ENCODE measurements at regions of chr6 and their contacts with region 1.

Region 1: GRCh38 chr6:105733565-105734162 is 330.8 kb upstream of the PREP start:
- DNase-seq: no peak
- H3K4me3 Mint-ChIP-seq: no peak overlapping the region
- H3K27ac Mint-ChIP-seq: no peak overlapping the region
- H3K4me1 Mint-ChIP-seq: no peaks in the 10 kb centered on the region
- H3K27me3 Mint-ChIP-seq: no peaks in the 10 kb centered on the region
- CTCF ChIP-seq: peak; percentile 60

Region 2: GRCh38 chr6:105484238-105485161 is 249.2 kb before region 1 on chr6:
- CTCF ChIA-PET with region 1: no interaction called
- intact Hi-C with region 1: loop called (anchors 5 kb)
- DNase-seq: no peak
- H3K4me3 Mint-ChIP-seq: no peak overlapping the region
- H3K27ac Mint-ChIP-seq: no peak overlapping the region
- H3K4me1 Mint-ChIP-seq: peaks cover 11% of the 10 kb centered on the region
- H3K27me3 Mint-ChIP-seq: no peaks in the 10 kb centered on the region
- CTCF ChIP-seq: peak; percentile 57

Region 3: GRCh38 chr6:105835373-105835772 is 101.7 kb after region 1 on chr6:
- CTCF ChIA-PET with region 1: no interaction called
- intact Hi-C with region 1: loop called (anchors 2 kb)
- DNase-seq: peak; percentile 48
- H3K4me3 Mint-ChIP-seq: no peak overlapping the region
- H3K27ac Mint-ChIP-seq: no peak overlapping the region
- H3K4me1 Mint-ChIP-seq: no peaks in the 10 kb centered on the region
- H3K27me3 Mint-ChIP-seq: no peaks in the 10 kb centered on the region
- CTCF ChIP-seq: peak; percentile 43

Region 4: GRCh38 chr6:106085984-106086813 is 352.5 kb after region 1 on chr6 and contains the start of gene PRDM1:
- CTCF ChIA-PET with region 1: no interaction called
- intact Hi-C with region 1: loop called (anchors 5 kb)
- DNase-seq: peak; percentile 89
- H3K4me3 Mint-ChIP-seq: peak within 1 kb of the TSS; percentile 97
- H3K27ac Mint-ChIP-seq: peak within 1 kb of the TSS; percentile 57
- H3K4me1 Mint-ChIP-seq: peaks cover 28% of the 10 kb centered on the region
- H3K27me3 Mint-ChIP-seq: peaks cover 27% of the 10 kb centered on the region
- CTCF ChIP-seq: no peak
- total RNA-seq, gene PRDM1: 0.40 and 1.1 TPM in 2 replicates

Region 5: GRCh38 chr6:106223300-106223930 is 489.8 kb after region 1 on chr6:
- CTCF ChIA-PET with region 1: no interaction called
- intact Hi-C with region 1: loop called (anchors 5 kb)
- DNase-seq: peak; percentile 70
- H3K4me3 Mint-ChIP-seq: no peak overlapping the region
- H3K27ac Mint-ChIP-seq: no peak overlapping the region
- H3K4me1 Mint-ChIP-seq: peaks cover 13% of the 10 kb centered on the region
- H3K27me3 Mint-ChIP-seq: no peaks in the 10 kb centered on the region
- CTCF ChIP-seq: peak; percentile 61

Region 6: GRCh38 chr6:106300944-106301343 is 567.3 kb after region 1 on chr6:
- CTCF ChIA-PET with region 1: no interaction called
- intact Hi-C with region 1: loop called (anchors 10 kb)
- DNase-seq: no peak
- H3K4me3 Mint-ChIP-seq: no peak overlapping the region
- H3K27ac Mint-ChIP-seq: no peak overlapping the region
- H3K4me1 Mint-ChIP-seq: peaks cover 7% of the 10 kb centered on the region
- H3K27me3 Mint-ChIP-seq: no peaks in the 10 kb centered on the region
- CTCF ChIP-seq: no peak